RWPE1 (cell line): ENCODE measurements at regions of chr5 and their contacts with region 1.

Region 1: GRCh38 chr5:132639706-132640130 is 18.3 kb upstream of the IL13 start:
- DNase-seq: no peak
- H3K27ac ChIP-seq: no peak overlapping the region
- CTCF ChIP-seq: no peak

Region 2: DNA sequence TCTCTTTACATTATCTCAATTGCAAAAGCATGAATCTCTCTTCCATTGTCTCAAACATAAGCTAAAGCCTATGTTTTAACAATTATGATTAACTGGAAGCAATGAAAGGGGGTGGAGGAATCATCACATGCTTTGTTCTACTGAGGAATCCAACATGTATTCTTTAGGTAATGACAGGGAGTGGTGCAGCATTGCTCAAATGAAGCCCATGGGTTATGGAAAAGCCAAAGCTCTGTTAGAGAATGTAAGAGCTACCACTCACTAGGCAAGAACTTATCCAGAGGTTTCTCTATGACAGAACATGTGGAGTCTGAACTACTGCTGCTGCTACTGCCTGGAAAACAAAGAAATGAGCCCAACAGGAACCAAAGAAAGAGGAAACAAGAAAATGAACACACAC is 68.9 kb after region 1 on chr5:
- CTCF ChIA-PET with region 1: no interaction called
- POLR2A ChIA-PET with region 1: interaction called, 10 read pairs
- DNase-seq: no peak
- H3K27ac ChIP-seq: no peak overlapping the region
- CTCF ChIP-seq: no peak

Region 3: DNA sequence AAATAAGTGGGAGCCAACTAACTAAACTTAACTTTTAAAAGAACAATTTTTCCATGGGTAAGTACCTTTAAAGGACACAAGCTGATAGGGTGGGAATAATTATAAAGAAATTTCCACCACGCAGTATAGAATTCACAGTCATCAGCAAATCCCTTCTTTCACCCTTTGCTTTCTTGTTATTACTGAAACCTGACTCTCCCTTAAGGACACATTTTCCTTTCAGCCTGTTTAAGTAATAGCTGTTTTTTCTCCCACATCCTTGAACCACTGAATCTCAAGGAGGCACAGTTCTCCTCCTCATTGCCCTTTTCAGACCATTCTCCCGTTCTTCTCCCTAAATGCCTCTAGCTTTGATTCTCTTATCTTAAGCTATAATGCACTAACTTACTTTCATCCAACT is 1322.4 kb after region 1 on chr5:
- CTCF ChIA-PET with region 1: no interaction called
- POLR2A ChIA-PET with region 1: interaction called, 10 read pairs
- DNase-seq: no peak
- H3K27ac ChIP-seq: no peak overlapping the region
- CTCF ChIP-seq: no peak